ENCODE measurements at regions of chr11 and their contacts with region 1.

Region 1: DNA sequence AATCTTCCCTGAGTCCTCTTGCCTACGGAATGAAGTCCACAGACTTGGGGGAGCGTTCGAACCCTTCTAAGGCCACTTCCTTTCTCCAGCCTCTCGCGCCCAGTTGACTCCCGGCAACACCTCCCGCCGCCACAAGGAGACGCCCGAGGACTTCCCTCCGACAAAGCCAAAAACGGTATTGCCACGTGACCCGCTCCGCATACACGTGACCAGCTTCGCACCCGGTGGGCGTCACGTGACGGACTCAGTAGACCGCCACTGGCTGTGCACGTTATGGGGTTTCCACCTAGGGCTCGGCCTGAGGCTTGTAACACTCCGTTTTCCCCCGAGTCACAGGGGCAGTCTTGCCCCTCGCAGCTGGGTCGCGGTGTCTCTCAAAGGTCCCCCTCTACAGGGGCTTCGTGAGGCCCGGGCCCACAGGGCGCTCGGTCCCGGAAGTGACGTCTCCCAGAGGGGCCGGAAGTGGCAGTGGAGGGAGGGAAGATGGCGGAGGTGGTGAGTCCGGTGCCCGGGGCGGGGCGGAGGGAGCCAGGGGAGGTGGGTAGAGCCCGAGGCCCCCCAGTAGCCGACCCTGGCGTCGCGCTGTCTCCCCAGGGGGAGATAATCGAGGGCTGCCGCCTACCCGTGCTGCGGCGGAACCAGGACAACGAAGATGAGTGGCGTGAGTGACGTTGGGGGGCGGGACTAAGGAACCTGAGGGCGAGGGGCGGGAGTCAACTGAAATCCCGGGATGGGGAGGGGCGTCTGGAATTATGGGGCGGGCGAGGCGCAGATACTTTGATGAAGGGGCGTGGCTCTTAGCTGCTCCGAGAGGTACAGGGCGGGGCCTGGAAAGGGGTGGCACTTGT is at the start of gene KAT5:
- DNase-seq: peak; percentile 98
- ATAC-seq: peak; percentile 80
- H3K4me3 ChIP-seq: peak within 1 kb of the TSS; percentile 64 to 72
- H3K27ac ChIP-seq: peak within 1 kb of the TSS; percentile 93
- H3K4me1 ChIP-seq: peaks cover 10 to 33% of the 10 kb centered on the region in 2 experiments; a peak in 3 of 4 replicates
- H3K27me3 ChIP-seq: no peaks in the 10 kb centered on the region
- CTCF ChIP-seq: peak in 2 of 3 experiments; percentile 94 to 97; a peak in 4 of 6 replicates
- POLR2A ChIP-seq: peak; percentile 23
- RAD21 ChIP-seq: no peak
- total RNA-seq, gene KAT5: 78.7 TPM

Region 2: DNA sequence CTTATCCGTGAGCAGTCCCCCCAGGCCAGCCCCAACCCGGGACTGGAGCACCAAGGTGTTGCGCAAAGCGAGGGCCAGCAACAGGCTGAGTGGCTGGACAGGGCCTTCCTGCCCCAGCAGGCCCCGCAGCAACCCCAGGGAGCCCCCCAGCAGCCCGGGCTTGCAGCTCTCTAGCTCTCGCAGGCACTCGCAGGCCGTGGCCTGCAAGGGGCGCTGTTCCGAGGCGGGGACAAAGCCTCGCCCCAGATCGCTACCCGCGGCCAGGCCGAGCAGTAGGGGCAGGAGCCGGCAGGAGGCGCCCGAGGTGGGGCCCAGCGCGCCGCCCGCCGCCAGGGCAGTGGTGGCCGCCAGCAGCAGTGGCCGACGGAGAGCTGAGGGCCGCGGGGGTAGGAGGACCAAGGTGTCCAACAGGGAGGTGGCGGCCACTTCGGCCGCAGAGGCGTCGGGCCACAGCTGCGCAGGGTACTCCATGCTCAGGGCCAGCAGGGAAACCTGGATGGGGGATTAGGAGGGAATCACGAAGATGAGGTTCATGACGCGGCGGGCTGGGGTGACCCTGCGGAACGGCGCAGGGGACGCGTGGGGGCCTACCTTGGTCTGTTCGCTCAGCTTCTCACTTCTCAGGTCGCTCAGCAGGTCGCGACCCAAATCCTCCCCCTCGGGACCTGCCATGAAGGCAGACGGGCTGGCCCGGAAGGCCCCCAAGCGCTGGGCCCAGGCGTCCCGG is 68.0 kb after region 1 on chr11:
- CTCF ChIA-PET with region 1: interaction called, 23 read pairs
- POLR2A ChIA-PET with region 1: interaction called, 5 read pairs
- RAD21 ChIA-PET with region 1: interaction called in 1 of 2 experiments, 6 read pairs
- intact Hi-C with region 1: loop called (anchors 5 kb)
- DNase-seq: peak; percentile 64
- ATAC-seq: peak; percentile 76
- H3K4me3 ChIP-seq: peak overlapping the region; percentile 88 to 91
- H3K27ac ChIP-seq: peak overlapping the region; percentile 98
- H3K4me1 ChIP-seq: peaks cover 12 to 38% of the 10 kb centered on the region in 2 experiments; a peak in 3 of 4 replicates
- H3K27me3 ChIP-seq: no peaks in the 10 kb centered on the region
- CTCF ChIP-seq: peak in 2 of 3 experiments; percentile 97 to 99; a peak in 4 of 6 replicates
- POLR2A ChIP-seq: no peak
- RAD21 ChIP-seq: no peak

Region 3: DNA sequence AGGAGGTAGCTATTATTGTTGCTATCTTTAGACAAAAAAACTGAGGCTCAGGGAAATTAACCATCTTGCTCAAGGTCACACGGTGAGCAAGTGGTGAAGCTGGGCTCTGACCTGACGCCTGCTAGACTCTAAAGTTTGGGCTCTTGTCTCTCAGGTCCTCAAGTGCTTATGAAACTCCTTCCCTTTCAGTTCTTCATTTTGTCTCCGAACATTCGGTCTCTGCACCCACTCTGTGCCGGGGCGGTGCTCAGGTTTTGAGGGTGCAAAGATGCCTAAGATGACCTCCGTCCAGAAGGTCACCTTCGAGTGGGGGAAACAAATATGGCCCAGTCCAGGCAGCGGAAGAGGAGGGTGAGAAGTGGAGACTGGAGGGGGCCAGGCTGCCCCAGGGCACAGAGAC is 90.8 kb after region 1 on chr11:
- CTCF ChIA-PET with region 1: no interaction called
- POLR2A ChIA-PET with region 1: no interaction called
- RAD21 ChIA-PET with region 1: no interaction called
- intact Hi-C with region 1: no loop called
- DNase-seq: no peak
- ATAC-seq: no peak
- H3K4me3 ChIP-seq: no peak overlapping the region
- H3K27ac ChIP-seq: no peak overlapping the region
- H3K4me1 ChIP-seq: peaks cover 0 to 3% of the 10 kb centered on the region in 2 experiments; a peak in 1 of 4 replicates
- H3K27me3 ChIP-seq: no peaks in the 10 kb centered on the region
- CTCF ChIP-seq: no peak
- POLR2A ChIP-seq: no peak
- RAD21 ChIP-seq: no peak

Region 4: DNA sequence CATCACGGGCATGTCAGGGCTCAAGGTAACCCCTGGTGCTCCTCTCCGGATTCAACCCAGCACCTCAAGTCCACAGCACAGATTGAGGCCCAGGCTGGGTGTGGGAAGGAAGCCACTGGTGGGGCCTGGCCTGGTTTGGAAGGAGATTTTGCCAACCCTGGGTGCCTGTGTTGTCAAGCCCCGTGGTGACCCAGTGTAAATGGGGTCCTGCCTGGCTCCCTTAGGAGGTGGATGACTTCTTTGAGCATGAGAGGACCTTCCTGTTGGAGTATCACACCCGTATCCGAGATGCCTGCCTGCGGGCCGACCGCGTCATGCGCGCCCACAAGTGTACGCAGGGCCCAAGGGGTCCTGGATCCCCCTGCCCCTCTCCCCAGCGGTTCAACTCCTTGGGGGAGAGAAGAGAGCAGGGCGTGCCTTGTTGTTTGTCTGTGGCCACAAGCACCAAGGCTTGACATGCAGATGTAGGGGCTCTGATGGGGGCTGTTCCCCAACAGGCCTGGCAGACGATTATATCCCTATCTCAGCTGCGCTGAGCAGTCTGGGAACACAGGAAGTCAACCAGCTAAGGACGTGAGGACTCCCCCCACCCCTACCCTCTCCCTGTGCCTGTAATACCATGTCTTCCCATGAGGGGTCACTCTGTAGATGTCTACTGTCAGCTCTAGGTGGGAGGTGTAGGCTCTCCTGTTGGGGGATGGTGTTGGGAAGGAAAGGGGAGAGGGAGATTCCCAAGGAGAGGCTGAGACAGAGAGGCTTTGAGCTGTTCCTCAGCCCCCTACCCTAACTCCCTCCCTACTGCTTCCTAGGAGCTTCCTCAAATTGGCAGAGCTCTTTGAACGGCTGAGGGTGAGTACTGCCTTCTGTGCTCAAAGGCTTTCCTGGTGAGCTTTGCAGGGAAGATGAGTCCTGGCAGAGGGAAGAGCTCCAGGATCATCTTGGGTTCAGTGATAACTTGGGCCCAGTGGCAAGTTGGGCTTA is 139.1 kb after region 1 on chr11:
- CTCF ChIA-PET with region 1: interaction called, 10 read pairs
- POLR2A ChIA-PET with region 1: interaction called, 6 read pairs
- RAD21 ChIA-PET with region 1: no interaction called
- intact Hi-C with region 1: no loop called
- DNase-seq: no peak
- ATAC-seq: peak; percentile 64
- H3K4me3 ChIP-seq: no peak overlapping the region
- H3K27ac ChIP-seq: no peak overlapping the region
- H3K4me1 ChIP-seq: peaks cover 2 to 7% of the 10 kb centered on the region in 2 experiments; a peak in 3 of 4 replicates
- H3K27me3 ChIP-seq: no peaks in the 10 kb centered on the region
- CTCF ChIP-seq: peak in 2 of 3 experiments; percentile 83 to 87; a peak in 4 of 6 replicates
- POLR2A ChIP-seq: no peak
- RAD21 ChIP-seq: no peak

Region 5: GRCh38 chr11:65873318-65874156 is 161.5 kb after region 1 on chr11:
- CTCF ChIA-PET with region 1: no interaction called
- POLR2A ChIA-PET with region 1: no interaction called
- RAD21 ChIA-PET with region 1: no interaction called
- intact Hi-C with region 1: loop called (anchors 5 kb)
- DNase-seq: peak; percentile 83
- ATAC-seq: peak; percentile 90
- H3K4me3 ChIP-seq: peak overlapping the region; percentile 52 to 55
- H3K27ac ChIP-seq: peak overlapping the region; percentile 55
- H3K4me1 ChIP-seq: peaks cover 10 to 13% of the 10 kb centered on the region in 2 experiments; a peak in 3 of 4 replicates
- H3K27me3 ChIP-seq: no peaks in the 10 kb centered on the region
- CTCF ChIP-seq: no peak
- POLR2A ChIP-seq: no peak
- RAD21 ChIP-seq: no peak

Region 6: DNA sequence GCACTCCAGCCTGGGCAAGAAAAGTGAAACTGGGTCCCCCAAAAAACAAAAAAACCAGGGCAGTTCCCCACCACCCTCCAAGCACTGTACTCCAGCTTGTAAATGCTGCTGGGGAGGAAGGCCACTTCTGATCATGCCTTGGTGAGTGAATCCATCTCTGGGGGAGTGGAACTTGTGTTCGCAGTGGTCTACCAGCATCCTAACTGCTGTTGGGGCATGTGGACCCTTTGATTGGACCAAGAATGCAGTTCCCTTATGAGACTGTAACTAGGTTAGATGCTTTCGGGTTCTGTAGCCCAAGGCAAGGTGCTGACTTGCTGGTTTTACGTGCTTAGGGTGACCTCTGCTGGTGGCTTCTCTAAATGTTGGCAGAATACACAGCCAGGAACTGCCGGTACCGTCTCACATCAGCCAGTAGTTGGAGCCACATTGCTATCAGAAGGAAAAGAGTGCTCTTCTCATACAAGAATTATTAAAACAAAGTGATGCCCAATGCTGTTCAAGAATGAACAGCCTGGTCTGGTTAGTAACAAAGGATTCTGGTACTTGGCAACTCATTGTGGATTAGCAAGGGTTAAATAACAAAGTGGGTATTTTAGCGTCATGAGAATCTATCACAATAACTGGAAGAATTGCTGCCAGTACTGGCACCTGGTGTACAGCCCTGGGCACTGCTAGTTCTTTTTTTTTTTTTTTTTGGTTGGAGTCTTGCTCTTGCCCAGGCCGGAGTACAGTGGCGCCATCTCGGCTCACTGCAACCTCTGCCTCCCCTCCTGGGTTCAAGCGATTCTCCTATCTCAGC is 277.0 kb after region 1 on chr11:
- CTCF ChIA-PET with region 1: interaction called, 11 read pairs
- POLR2A ChIA-PET with region 1: no interaction called
- RAD21 ChIA-PET with region 1: no interaction called
- intact Hi-C with region 1: no loop called
- DNase-seq: peak; percentile 95
- ATAC-seq: peak; percentile 98
- H3K4me3 ChIP-seq: no peak overlapping the region
- H3K27ac ChIP-seq: peak overlapping the region; percentile 39
- H3K4me1 ChIP-seq: peaks cover 0 to 8% of the 10 kb centered on the region in 2 experiments; a peak in 2 of 4 replicates
- H3K27me3 ChIP-seq: no peaks in the 10 kb centered on the region
- CTCF ChIP-seq: peak; percentile 88 to 100 (median 99)
- POLR2A ChIP-seq: no peak
- RAD21 ChIP-seq: peak; percentile 100